Dorsolateral prefrontal cortex (tissue), 120 donors: ENCODE measurements at regions of chr12 and their contacts with region 1.

Region 1: GRCh38 chr12:132153501-132154340 is 9.5 kb downstream of the NOC4L start:
- DNase-seq: peak; percentile 39 to 78 (median 53)
- H3K4me3 ChIP-seq: peak overlapping the region in 20 of 59 donors; percentile 11 to 56 (median 32)
- H3K27ac ChIP-seq: peak overlapping the region in 1 of 59 donors; percentile 14
- H3K27me3 ChIP-seq: no peaks in the 10 kb centered on the region
- CTCF ChIP-seq: peak; percentile 36 to 93 (median 84)

Region 2: GRCh38 chr12:132218915-132219314 is 65.2 kb after region 1 on chr12:
- intact Hi-C with region 1: loop called in 1 of 2 experiments (anchors 5 kb)
- DNase-seq: no peak
- H3K4me3 ChIP-seq: no peak overlapping the region
- H3K27ac ChIP-seq: no peak overlapping the region
- H3K27me3 ChIP-seq: peaks cover 0 to 4% (median 0%) of the 10 kb centered on the region in 45 donors
- CTCF ChIP-seq: peak in 23 of 56 donors; percentile 16 to 46 (median 27)

Region 3: DNA sequence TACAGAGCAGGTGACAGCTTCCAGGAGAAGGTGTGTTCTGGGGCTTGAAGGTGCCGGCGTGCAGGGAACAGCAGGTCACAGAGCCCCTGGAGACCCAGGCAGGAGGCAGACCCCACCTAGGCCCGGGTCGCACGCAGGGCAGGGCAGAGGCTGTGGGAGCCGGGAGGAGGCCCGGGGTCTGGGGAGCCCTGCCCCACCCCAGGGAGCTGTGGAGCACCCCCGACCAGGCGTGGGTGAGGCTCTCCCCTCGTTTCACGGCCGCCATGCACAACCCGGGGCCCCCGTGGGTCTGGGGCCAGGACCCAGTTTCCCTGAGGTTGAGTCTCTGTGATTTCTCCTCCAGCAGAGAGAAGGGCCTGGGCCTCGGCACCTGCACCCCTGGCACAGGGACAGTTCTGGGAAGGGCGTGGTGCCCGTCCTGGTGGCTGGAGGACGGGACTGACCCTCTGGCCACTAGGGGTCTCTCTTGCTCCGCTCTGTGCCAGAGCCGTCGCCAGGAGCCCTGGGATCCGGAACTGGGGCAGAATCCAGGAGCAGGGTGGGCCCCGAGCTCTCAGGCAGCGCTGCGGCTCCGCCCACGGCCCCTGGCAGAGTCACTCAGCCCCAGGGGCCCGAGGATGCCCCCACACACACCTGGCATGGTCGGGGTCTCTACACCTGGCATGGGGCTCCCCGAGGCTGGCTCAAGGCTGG is 261.1 kb after region 1 on chr12:
- intact Hi-C with region 1: loop called in 1 of 2 experiments (anchors 5 kb)
- DNase-seq: peak in 9 of 10 donors; percentile 55 to 87 (median 72)
- H3K4me3 ChIP-seq: peak overlapping the region in 5 of 59 donors; percentile 5 to 31 (median 20)
- H3K27ac ChIP-seq: no peak overlapping the region
- H3K27me3 ChIP-seq: peaks cover 0 to 55% (median 30%) of the 10 kb centered on the region in 45 donors
- CTCF ChIP-seq: peak; percentile 52 to 99 (median 93)